ENCODE measurements at regions of chr1 and their contacts with region 1.

Region 1: DNA sequence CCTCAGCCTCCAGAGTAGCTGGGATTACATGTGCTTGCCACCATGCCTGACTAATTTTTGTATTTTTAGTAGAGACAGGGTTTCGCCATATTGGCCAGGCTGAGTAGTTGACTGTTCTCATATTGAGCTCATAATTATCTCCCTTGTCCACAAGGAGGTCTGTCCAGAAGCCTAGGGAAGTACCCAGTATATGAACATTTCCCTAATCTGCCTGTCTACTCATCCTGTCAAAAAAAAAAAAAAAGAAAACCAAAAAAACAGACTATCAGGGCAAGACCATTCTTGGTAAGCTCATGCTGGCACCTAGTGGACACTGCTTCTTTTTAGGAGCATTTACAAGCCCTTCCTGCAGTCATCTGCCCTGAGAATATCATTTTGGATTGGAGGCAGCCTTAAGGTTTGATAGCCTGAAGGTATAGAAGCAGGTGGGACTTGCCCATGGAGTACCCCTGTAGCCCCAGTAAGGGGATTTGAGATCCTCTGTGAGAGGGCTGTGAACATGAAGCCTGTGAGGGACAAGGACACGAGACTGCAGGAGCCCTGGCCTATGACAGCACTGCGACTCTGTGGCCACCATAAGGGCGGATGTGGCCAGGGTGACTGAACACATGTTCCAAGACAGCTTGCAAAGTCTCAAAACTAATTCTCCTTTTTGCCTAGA is 10.8 kb upstream of the DUSP12 start:
- DNase-seq: peak; percentile 93
- ATAC-seq: peak; percentile 89
- H3K4me3 ChIP-seq: no peak overlapping the region
- H3K27ac ChIP-seq: peak overlapping the region; percentile 83
- H3K4me1 ChIP-seq: peaks cover 62% of the 10 kb centered on the region
- H3K27me3 ChIP-seq: no peaks in the 10 kb centered on the region
- CTCF ChIP-seq: peak; percentile 57 to 83 (median 78)
- EP300 ChIP-seq: 0 out of 4 replicates have a peak, but pooled peaks of 1 of the 2 experiments have one; percentile 5
- POLR2A ChIP-seq: peak; percentile 56
- RAD21 ChIP-seq: peak; percentile 95

Region 2: GRCh38 chr1:161486806-161487741 is 251.7 kb before region 1 on chr1:
- CTCF ChIA-PET with region 1: interaction called, 262 read pairs
- POLR2A ChIA-PET with region 1: interaction called, 3 read pairs
- RAD21 ChIA-PET with region 1: interaction called, 35 read pairs
- SMC1A ChIA-PET with region 1: interaction called, 97 read pairs
- in situ Hi-C with region 1: loop called (anchors 10 kb)
- intact Hi-C with region 1: loop called (anchors 1 kb)
- DNase-seq: peak; percentile 23
- ATAC-seq: peak; percentile 88
- H3K4me3 ChIP-seq: no peak overlapping the region
- H3K27ac ChIP-seq: no peak overlapping the region
- H3K4me1 ChIP-seq: no peaks in the 10 kb centered on the region
- H3K27me3 ChIP-seq: no peaks in the 10 kb centered on the region
- CTCF ChIP-seq: peak; percentile 66 to 76 (median 76)
- EP300 ChIP-seq: no peak
- POLR2A ChIP-seq: no peak
- RAD21 ChIP-seq: peak; percentile 86

Region 3: GRCh38 chr1:161681879-161682278 is 56.9 kb before region 1 on chr1:
- CTCF ChIA-PET with region 1: interaction called, 5 read pairs
- POLR2A ChIA-PET with region 1: no interaction called
- RAD21 ChIA-PET with region 1: interaction called, 3 read pairs
- SMC1A ChIA-PET with region 1: interaction called, 11 read pairs
- in situ Hi-C with region 1: no loop called
- intact Hi-C with region 1: no loop called
- DNase-seq: no peak
- ATAC-seq: no peak
- H3K4me3 ChIP-seq: no peak overlapping the region
- H3K27ac ChIP-seq: no peak overlapping the region
- H3K4me1 ChIP-seq: no peaks in the 10 kb centered on the region
- H3K27me3 ChIP-seq: no peaks in the 10 kb centered on the region
- CTCF ChIP-seq: no peak
- EP300 ChIP-seq: no peak
- POLR2A ChIP-seq: no peak
- RAD21 ChIP-seq: no peak

Region 4: GRCh38 chr1:161706482-161707347 is 32.0 kb before region 1 on chr1 and contains the start of gene FCRLA:
- CTCF ChIA-PET with region 1: interaction called, 75 read pairs
- POLR2A ChIA-PET with region 1: interaction called, 23 read pairs
- RAD21 ChIA-PET with region 1: interaction called, 74 read pairs
- SMC1A ChIA-PET with region 1: interaction called, 61 read pairs
- in situ Hi-C with region 1: no loop called
- intact Hi-C with region 1: loop called (anchors 2 kb)
- DNase-seq: peak; percentile 88
- ATAC-seq: peak; percentile 85
- H3K4me3 ChIP-seq: peak within 1 kb of the TSS; percentile 81
- H3K27ac ChIP-seq: peak within 1 kb of the TSS; percentile 85
- H3K4me1 ChIP-seq: peaks cover 32% of the 10 kb centered on the region
- H3K27me3 ChIP-seq: no peaks in the 10 kb centered on the region
- CTCF ChIP-seq: no peak
- EP300 ChIP-seq: peak in 1 of 2 experiments; percentile 72; a peak in 2 of 4 replicates
- POLR2A ChIP-seq: peak; percentile 90
- RAD21 ChIP-seq: no peak
- polyA plus RNA-seq, gene FCRLA: 418 to 714 TPM

Region 5: DNA sequence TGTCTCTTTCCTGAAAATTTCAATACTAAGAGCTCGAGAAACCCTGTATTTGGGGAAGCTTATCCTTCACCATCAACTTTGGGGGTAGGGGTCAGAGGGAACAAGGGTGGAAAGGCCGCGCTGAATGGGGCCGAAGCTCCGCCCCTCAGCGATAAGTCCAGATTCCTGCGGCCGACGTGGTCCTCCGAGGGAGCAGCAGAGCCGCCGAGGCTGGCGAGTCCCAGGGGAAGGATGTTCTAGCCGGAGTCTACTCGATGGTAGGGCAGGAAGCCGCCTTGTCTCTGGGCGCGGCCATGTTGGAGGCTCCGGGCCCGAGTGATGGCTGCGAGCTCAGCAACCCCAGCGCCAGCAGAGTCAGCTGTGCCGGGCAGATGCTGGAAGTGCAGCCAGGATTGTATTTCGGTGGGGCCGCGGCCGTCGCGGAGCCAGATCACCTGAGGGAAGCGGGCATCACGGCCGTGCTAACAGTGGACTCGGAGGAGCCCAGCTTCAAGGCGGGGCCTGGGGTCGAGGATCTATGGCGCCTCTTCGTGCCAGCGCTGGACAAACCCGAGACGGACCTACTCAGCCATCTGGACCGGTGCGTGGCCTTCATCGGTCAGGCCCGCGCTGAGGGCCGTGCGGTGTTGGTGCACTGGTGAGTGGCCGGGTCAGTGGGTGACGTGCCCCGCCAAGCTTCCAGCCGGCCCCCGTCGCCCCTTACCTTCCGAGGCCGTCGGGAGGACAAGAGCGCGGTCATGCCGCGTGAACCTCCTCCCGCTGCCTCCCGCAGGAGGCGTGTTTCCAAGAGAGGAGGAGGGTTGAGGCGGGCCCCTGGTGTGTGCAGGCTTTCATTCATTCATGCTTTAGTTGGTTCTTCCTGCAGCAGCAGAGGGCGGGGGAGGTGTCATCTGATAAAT is 11.0 kb after region 1 on chr1 and contains the start of gene DUSP12:
- CTCF ChIA-PET with region 1: interaction called, 44 read pairs
- POLR2A ChIA-PET with region 1: interaction called, 4 read pairs
- RAD21 ChIA-PET with region 1: interaction called, 36 read pairs
- SMC1A ChIA-PET with region 1: interaction called, 22 read pairs
- in situ Hi-C with region 1: no loop called
- intact Hi-C with region 1: no loop called
- DNase-seq: no peak
- ATAC-seq: peak; percentile 97
- H3K4me3 ChIP-seq: peak within 1 kb of the TSS; percentile 87
- H3K27ac ChIP-seq: peak within 1 kb of the TSS; percentile 72
- H3K4me1 ChIP-seq: peaks cover 25% of the 10 kb centered on the region
- H3K27me3 ChIP-seq: no peaks in the 10 kb centered on the region
- CTCF ChIP-seq: peak; percentile 26 to 70 (median 33); a peak in 4 of 6 replicates
- EP300 ChIP-seq: no peak
- POLR2A ChIP-seq: peak; percentile 96
- RAD21 ChIP-seq: no peak
- polyA plus RNA-seq, gene DUSP12: 7.0 to 13.3 TPM

Measured in GM12878 (cell line).